ENCODE measurements at regions of chrX and their contacts with region 1.

Region 1: DNA sequence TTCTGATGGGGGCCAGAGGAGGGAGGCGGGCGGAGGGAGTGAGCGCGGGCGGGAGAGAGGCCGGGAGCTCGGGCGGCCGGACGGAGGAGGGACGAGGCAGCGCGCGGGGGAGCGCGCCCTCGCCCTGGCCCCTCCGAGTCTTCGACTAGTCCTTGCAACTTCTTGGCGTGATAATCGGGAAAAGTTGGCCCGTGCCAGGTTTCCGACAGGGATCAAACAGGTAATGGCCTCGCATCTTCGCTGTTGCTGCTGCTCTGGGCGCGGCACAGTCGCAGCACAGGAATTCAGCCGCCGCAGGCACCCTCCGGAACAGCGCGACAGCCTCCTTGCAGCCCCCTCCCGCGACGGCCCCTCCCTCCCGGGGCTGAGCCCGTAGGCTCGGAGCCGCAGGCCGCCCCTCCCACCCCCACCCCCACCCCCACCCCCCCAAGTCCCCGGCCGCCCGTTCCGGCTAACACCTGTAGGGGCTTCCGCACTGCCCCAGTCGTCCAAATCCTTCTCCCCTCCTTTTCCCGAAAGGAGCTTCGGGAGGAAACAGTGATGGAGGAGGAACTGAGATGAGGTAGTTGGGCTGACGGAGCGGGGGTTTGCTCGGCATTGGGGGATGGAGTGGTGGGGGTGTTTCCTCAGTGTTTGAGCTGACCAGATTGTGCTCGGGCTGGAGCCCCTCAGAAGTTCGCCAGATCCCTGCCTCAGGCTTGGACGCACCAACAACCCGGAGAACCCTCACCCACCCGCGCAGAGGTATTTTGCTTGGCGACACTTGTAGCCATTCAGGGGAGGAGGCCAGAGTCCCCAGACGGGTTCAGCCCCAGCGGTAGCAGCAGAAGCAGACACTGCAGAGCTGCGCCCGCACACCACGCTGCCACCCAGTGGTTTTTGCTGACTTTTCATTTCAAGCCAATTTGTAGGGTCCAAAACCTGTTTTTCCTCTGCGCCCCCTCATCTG is at the start of gene FGF13:
- DNase-seq: peak; percentile 21 to 60
- H3K4me3 ChIP-seq: peak within 1 kb of the TSS; percentile 65 to 82 (median 72)
- H3K27ac ChIP-seq: peak within 1 kb of the TSS; percentile 63; the same call in 1 of the 2 replicates
- H3K4me1 ChIP-seq: no peaks in the 10 kb centered on the region; a peak in 3 of 7 replicates
- H3K27me3 ChIP-seq: no peaks in the 10 kb centered on the region
- CTCF ChIP-seq: peak; percentile 43 to 62 (median 46)
- EP300 ChIP-seq: no peak
- POLR2A ChIP-seq: peak; percentile 24 to 69
- RAD21 ChIP-seq: peak; percentile 65
- total RNA-seq, gene FGF13: 34.7 and 36.1 TPM in 2 replicates

Region 2: GRCh38 chrX:138378876-138379275 is 332.8 kb before region 1 on chrX:
- CTCF ChIA-PET with region 1: no interaction called
- POLR2A ChIA-PET with region 1: no interaction called
- DNase-seq: no peak
- H3K4me3 ChIP-seq: no peak overlapping the region
- H3K27ac ChIP-seq: no peak overlapping the region
- H3K4me1 ChIP-seq: no peaks in the 10 kb centered on the region
- H3K27me3 ChIP-seq: no peaks in the 10 kb centered on the region
- CTCF ChIP-seq: no peak
- EP300 ChIP-seq: no peak
- POLR2A ChIP-seq: no peak
- RAD21 ChIP-seq: no peak

Region 3: DNA sequence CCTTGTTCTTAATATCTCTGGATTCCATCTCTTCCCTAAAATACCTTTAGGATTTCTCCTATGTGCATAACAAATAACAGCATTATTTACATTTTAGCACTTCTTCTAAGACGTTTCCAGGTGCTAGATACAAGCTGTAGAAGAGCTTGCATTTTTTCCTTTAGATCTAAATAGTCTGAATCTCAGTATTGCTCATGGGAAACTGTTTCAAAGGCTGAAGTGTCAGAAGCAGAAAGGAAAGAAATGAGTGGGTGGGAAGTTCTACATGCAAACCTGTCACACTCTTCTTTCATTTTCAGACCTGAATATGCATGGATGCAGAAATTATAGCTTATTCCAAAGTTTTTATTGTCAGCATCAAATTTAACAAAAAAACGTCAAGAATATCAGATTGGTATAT is 42.0 kb before region 1 on chrX:
- CTCF ChIA-PET with region 1: no interaction called
- POLR2A ChIA-PET with region 1: no interaction called
- DNase-seq: no peak
- H3K4me3 ChIP-seq: no peak overlapping the region
- H3K27ac ChIP-seq: no peak overlapping the region
- H3K4me1 ChIP-seq: no peaks in the 10 kb centered on the region
- H3K27me3 ChIP-seq: no peaks in the 10 kb centered on the region
- CTCF ChIP-seq: no peak
- EP300 ChIP-seq: no peak
- POLR2A ChIP-seq: no peak
- RAD21 ChIP-seq: no peak

Region 4: DNA sequence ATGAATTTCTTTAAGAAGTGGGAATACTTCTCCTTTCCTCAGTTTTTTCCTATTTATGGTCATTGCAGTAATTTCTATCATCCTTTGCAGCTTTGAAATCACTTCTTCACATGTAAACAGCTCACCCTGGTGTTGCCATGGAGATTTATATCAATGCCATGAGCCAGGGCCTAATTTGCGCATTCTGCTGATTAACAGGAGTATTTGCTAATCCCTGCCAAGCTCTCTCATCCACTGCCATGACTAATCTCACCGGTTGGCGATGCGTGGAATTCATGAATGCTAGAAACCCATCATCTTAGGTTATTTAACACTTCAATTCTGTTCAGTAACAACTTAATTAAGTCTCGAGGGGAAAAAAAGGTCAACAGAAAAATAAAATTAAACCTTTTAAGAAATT is 11.6 kb after region 1 on chrX:
- CTCF ChIA-PET with region 1: interaction called, 5 read pairs
- POLR2A ChIA-PET with region 1: interaction called, 17 read pairs
- DNase-seq: no peak
- H3K4me3 ChIP-seq: no peak overlapping the region
- H3K27ac ChIP-seq: no peak overlapping the region
- H3K4me1 ChIP-seq: no peaks in the 10 kb centered on the region
- H3K27me3 ChIP-seq: no peaks in the 10 kb centered on the region
- CTCF ChIP-seq: no peak
- EP300 ChIP-seq: no peak
- POLR2A ChIP-seq: no peak
- RAD21 ChIP-seq: no peak

Region 5: DNA sequence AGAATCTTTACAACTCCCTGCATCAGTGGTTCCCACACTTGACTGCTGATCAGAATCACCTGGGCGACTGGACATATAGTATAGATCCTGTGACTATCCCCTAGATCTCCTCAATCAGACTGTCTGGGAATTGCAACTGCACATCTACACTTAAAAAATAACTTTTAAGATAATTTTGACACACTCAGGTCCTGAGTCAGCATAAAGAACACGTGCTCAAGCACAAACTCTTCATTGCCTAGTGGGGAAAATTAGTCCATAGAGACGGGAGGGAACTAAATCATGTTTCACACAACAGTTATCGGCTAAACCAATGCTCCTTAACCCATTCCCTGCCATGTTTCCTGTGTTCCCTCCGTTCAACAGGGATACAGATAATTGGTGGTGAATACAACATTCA is 243.3 kb after region 1 on chrX:
- CTCF ChIA-PET with region 1: no interaction called
- POLR2A ChIA-PET with region 1: no interaction called
- DNase-seq: no peak
- H3K4me3 ChIP-seq: no peak overlapping the region
- H3K27ac ChIP-seq: no peak overlapping the region
- H3K4me1 ChIP-seq: no peaks in the 10 kb centered on the region
- H3K27me3 ChIP-seq: no peaks in the 10 kb centered on the region
- CTCF ChIP-seq: no peak
- EP300 ChIP-seq: no peak
- POLR2A ChIP-seq: no peak
- RAD21 ChIP-seq: no peak